H1 (cell line): ENCODE measurements at regions of chr5 and their contacts with region 1.

Region 1: GRCh38 chr5:148740966-148741742 is 85.3 kb upstream of the ADRB2 start:
- DNase-seq: no peak
- H3K4me3 ChIP-seq: no peak overlapping the region
- H3K27ac ChIP-seq: no peak overlapping the region
- H3K4me1 ChIP-seq: no peaks in the 10 kb centered on the region
- H3K27me3 ChIP-seq: no peaks in the 10 kb centered on the region
- CTCF ChIP-seq: peak in 2 of 3 experiments; percentile 50 to 60; a peak in 2 of 4 replicates
- EP300 ChIP-seq: no peak
- POLR2A ChIP-seq: no peak
- RAD21 ChIP-seq: peak; percentile 62 to 70

Region 2: DNA sequence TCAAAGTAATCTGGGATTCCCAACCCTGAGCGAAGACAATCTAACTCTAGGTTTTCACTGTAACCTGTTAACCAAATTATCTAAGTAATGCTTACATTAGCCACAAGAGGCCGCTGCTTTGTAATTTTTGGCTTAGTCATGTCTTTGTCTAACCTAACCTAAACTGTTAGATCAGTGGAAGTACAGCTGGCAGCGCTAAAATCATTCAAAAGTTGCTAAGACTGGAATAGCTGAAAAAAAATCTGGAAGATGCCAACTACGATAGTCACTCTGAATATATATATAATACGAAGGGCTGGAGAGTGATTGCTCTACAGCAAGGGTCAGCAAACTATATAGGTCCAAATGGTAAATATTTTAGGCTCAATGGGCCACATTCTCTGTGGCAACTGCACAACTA is 297.2 kb before region 1 on chr5:
- CTCF ChIA-PET with region 1: interaction called, 231 read pairs
- POLR2A ChIA-PET with region 1: no interaction called
- DNase-seq: no peak
- H3K4me3 ChIP-seq: no peak overlapping the region
- H3K27ac ChIP-seq: no peak overlapping the region
- H3K4me1 ChIP-seq: no peaks in the 10 kb centered on the region; a peak in 1 of 7 replicates
- H3K27me3 ChIP-seq: no peaks in the 10 kb centered on the region
- CTCF ChIP-seq: peak in 2 of 3 experiments; percentile 71 to 80; a peak in 3 of 4 replicates
- EP300 ChIP-seq: no peak
- POLR2A ChIP-seq: no peak
- RAD21 ChIP-seq: peak; percentile 82 to 86

Region 3: DNA sequence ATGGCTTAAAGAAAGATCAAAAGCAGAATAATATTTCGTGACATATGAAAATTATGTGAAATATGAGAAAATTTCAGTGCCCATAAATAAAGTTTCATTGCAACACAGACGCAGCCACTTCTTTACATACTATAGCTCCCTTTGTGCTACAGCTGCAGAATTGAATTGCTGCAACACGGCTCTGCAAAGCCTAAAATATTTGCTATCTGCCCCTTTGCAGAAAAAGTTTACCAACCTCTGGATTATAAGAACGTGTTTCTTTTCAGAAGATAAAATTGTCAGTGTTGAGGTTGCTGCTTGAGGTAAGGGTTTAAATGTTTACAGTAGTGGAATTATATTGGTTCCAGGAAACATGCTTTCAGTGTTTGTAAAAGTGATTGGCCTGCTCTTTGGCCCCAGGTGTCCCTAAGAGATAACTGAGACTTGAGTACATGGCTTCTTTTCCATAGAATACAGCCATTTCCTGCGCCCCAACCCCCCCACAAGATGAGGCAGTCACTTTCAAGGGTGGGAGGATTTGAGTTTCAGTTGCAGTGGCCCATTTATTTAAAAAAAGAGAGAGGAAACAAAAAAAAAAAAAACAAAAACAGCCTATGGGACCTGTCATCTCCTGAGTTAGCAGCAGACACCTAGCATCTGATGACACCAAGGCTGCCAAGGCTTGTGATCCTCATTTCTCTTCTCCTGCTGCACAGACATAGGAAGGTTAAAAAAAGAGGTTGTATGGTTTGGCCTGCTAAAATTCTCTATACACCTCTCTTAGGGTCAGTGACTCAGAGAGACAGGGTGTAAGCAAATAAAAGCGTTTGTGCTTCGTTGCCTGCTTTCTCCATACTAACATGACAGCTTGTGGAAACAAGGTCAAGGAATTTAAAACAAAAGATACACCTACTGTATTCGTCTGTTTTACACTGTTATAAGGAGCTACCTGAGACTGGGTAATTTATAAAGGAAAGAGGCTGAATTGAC is 58.8 kb before region 1 on chr5:
- CTCF ChIA-PET with region 1: no interaction called
- POLR2A ChIA-PET with region 1: no interaction called
- DNase-seq: no peak
- H3K4me3 ChIP-seq: no peak overlapping the region
- H3K27ac ChIP-seq: no peak overlapping the region
- H3K4me1 ChIP-seq: no peaks in the 10 kb centered on the region
- H3K27me3 ChIP-seq: no peaks in the 10 kb centered on the region
- CTCF ChIP-seq: no peak
- EP300 ChIP-seq: no peak
- POLR2A ChIP-seq: no peak
- RAD21 ChIP-seq: no peak

Region 4: DNA sequence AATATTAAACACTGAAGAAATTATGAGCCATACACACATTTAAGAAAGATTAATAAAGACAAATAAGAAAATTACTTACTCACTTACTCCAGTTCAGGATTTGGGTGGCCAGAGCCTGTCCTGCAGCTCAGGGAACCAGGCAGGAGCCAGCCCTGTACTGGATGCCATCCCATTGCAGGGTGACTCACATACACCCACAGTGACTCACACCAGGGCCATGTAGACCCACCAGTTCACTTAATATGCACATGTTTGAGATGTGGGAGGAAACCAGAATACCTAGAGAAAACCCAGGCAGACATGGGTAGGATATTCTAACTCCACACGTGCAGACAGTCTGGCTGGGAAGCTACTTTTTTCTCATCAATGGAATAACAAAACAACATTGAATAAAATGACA is 35.6 kb after region 1 on chr5:
- CTCF ChIA-PET with region 1: interaction called, 15 read pairs
- POLR2A ChIA-PET with region 1: no interaction called
- DNase-seq: no peak
- H3K4me3 ChIP-seq: no peak overlapping the region
- H3K27ac ChIP-seq: no peak overlapping the region
- H3K4me1 ChIP-seq: 0 out of 7 replicates have a peak, but pooled peaks cover 0 to 2% (median 0%) of the 10 kb centered on the region in 4 experiments
- H3K27me3 ChIP-seq: no peaks in the 10 kb centered on the region
- CTCF ChIP-seq: no peak
- EP300 ChIP-seq: no peak
- POLR2A ChIP-seq: no peak
- RAD21 ChIP-seq: no peak

Region 5: GRCh38 chr5:148912714-148913398 is 171.7 kb after region 1 on chr5:
- CTCF ChIA-PET with region 1: interaction called, 20 read pairs
- POLR2A ChIA-PET with region 1: no interaction called
- DNase-seq: peak; percentile 53 to 68
- H3K4me3 ChIP-seq: no peak overlapping the region
- H3K27ac ChIP-seq: no peak overlapping the region; the same call in none of the 2 replicates
- H3K4me1 ChIP-seq: peaks cover 4 to 17% (median 9%) of the 10 kb centered on the region in 4 experiments
- H3K27me3 ChIP-seq: no peaks in the 10 kb centered on the region
- CTCF ChIP-seq: peak; percentile 29 to 56 (median 52)
- EP300 ChIP-seq: peak in 1 of 2 experiments; percentile 82; a peak in 1 of 3 replicates
- POLR2A ChIP-seq: no peak
- RAD21 ChIP-seq: peak; percentile 65 to 72

Region 6: DNA sequence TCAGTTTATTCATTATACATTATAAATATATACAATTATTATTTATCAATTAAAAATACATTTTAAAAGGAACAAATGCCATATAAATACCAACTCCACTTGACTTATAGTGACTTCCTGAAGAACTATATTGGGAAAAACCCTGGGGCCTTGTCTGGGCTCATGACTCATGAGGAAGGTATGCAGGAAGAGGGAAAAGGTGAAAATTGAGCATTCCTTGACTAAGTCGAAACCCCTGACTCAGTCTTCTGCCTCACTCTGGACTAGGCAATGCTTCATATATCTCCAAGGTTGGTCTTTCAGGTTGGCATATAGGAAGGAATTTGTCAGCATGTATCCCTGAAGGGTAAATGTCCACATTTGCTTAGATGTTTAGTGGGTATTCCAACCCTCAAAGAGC is 243.2 kb after region 1 on chr5:
- CTCF ChIA-PET with region 1: interaction called, 11 read pairs
- POLR2A ChIA-PET with region 1: no interaction called
- DNase-seq: no peak
- H3K4me3 ChIP-seq: no peak overlapping the region
- H3K27ac ChIP-seq: no peak overlapping the region
- H3K4me1 ChIP-seq: peaks cover 0 to 7% (median 1%) of the 10 kb centered on the region in 4 experiments; a peak in 2 of 7 replicates
- H3K27me3 ChIP-seq: no peaks in the 10 kb centered on the region
- CTCF ChIP-seq: no peak
- EP300 ChIP-seq: no peak
- POLR2A ChIP-seq: no peak
- RAD21 ChIP-seq: no peak

Region 7: GRCh38 chr5:149011074-149011476 is 269.9 kb after region 1 on chr5:
- CTCF ChIA-PET with region 1: interaction called, 22 read pairs
- POLR2A ChIA-PET with region 1: no interaction called
- DNase-seq: no peak
- H3K4me3 ChIP-seq: no peak overlapping the region
- H3K27ac ChIP-seq: no peak overlapping the region
- H3K4me1 ChIP-seq: no peaks in the 10 kb centered on the region
- H3K27me3 ChIP-seq: no peaks in the 10 kb centered on the region
- CTCF ChIP-seq: no peak
- EP300 ChIP-seq: no peak
- POLR2A ChIP-seq: no peak
- RAD21 ChIP-seq: no peak